ENCODE measurements at regions of chr2 and their contacts with region 1.

Region 1: GRCh38 chr2:169584005-169584877 is at the start of gene PPIG:
- DNase-seq: peak; percentile 88 to 92
- H3K4me3 ChIP-seq: peak within 1 kb of the TSS; percentile 86
- H3K4me3 Mint-ChIP-seq: peak within 1 kb of the TSS; percentile 99
- H3K27ac Mint-ChIP-seq: peak within 1 kb of the TSS; percentile 99
- H3K4me1 ChIP-seq: peaks cover 8% of the 10 kb centered on the region
- H3K4me1 Mint-ChIP-seq: peaks cover 4% of the 10 kb centered on the region
- H3K27me3 ChIP-seq: no peaks in the 10 kb centered on the region
- H3K27me3 Mint-ChIP-seq: no peaks in the 10 kb centered on the region
- CTCF ChIP-seq: no peak
- total RNA-seq, gene PPIG: 60.3 and 68.9 TPM in 2 replicates

Region 2: GRCh38 chr2:169562519-169562918 is 21.7 kb before region 1 on chr2:
- CTCF ChIA-PET with region 1: no interaction called
- POLR2A ChIA-PET with region 1: no interaction called
- intact Hi-C with region 1: no loop called
- DNase-seq: no peak
- H3K4me3 ChIP-seq: no peak overlapping the region
- H3K4me3 Mint-ChIP-seq: no peak overlapping the region
- H3K27ac Mint-ChIP-seq: no peak overlapping the region
- H3K4me1 ChIP-seq: no peaks in the 10 kb centered on the region
- H3K4me1 Mint-ChIP-seq: no peaks in the 10 kb centered on the region
- H3K27me3 ChIP-seq: no peaks in the 10 kb centered on the region
- H3K27me3 Mint-ChIP-seq: no peaks in the 10 kb centered on the region
- CTCF ChIP-seq: no peak

Region 3: DNA sequence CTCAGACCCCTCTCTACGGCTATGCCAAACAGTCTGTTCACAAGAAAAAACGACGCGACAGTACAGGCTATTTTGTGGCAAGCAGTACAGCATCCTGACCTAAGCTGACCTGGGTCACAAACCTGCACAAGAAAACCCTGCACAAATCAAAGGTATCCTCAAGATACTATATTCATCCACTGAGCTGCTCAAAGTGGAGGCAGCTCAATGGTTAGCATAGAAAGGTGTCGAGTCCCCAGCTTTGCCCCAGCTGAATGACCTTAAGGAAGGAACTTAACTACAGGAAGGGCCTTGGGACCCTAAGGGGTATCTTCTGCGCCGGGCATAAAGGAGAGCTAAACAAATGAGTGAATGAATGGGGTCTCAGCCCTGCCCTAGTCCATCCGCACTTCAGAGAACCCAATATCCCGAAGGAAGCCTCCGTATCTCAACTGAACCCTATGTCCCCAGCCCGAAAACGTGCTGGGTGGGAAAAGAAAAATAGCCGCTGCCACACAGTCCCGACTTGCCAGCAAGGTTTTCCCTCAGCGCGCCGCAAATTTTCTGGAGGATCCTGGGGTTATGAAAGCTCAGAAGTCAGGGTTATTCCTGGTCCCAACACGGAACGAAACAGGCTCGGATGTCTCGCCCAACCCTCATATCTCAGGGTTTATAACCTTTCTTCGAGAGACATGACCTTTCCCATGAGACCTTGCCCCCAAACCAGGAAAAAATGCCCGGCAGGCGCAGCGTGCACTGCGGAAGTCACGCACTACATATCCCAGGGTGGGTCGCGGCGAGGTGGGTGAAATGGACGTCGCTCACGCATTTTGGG is 10.9 kb before region 1 on chr2 and contains the start of gene FASTKD1:
- CTCF ChIA-PET with region 1: no interaction called
- POLR2A ChIA-PET with region 1: interaction called, 7 read pairs
- intact Hi-C with region 1: loop called (anchors 1 kb)
- DNase-seq: peak; percentile 93 to 96
- H3K4me3 ChIP-seq: peak within 1 kb of the TSS; percentile 56
- H3K4me3 Mint-ChIP-seq: peak within 1 kb of the TSS; percentile 98
- H3K27ac Mint-ChIP-seq: peak within 1 kb of the TSS; percentile 93
- H3K4me1 ChIP-seq: peaks cover 4% of the 10 kb centered on the region; the same call in 1 of the 2 replicates
- H3K4me1 Mint-ChIP-seq: no peaks in the 10 kb centered on the region
- H3K27me3 ChIP-seq: no peaks in the 10 kb centered on the region
- H3K27me3 Mint-ChIP-seq: no peaks in the 10 kb centered on the region
- CTCF ChIP-seq: no peak
- total RNA-seq, gene FASTKD1: 27.6 and 36.8 TPM in 2 replicates

Region 4: GRCh38 chr2:169659320-169659719 is 75.1 kb after region 1 on chr2:
- CTCF ChIA-PET with region 1: no interaction called
- POLR2A ChIA-PET with region 1: no interaction called
- intact Hi-C with region 1: no loop called
- DNase-seq: no peak
- H3K4me3 ChIP-seq: no peak overlapping the region
- H3K4me3 Mint-ChIP-seq: no peak overlapping the region
- H3K27ac Mint-ChIP-seq: no peak overlapping the region
- H3K4me1 ChIP-seq: no peaks in the 10 kb centered on the region
- H3K4me1 Mint-ChIP-seq: no peaks in the 10 kb centered on the region
- H3K27me3 ChIP-seq: no peaks in the 10 kb centered on the region
- H3K27me3 Mint-ChIP-seq: peaks cover 13% of the 10 kb centered on the region
- CTCF ChIP-seq: no peak

Region 5: GRCh38 chr2:170298115-170298514 is 713.9 kb after region 1 on chr2:
- CTCF ChIA-PET with region 1: no interaction called
- POLR2A ChIA-PET with region 1: no interaction called
- intact Hi-C with region 1: no loop called
- DNase-seq: no peak
- H3K4me3 ChIP-seq: no peak overlapping the region
- H3K4me3 Mint-ChIP-seq: no peak overlapping the region
- H3K27ac Mint-ChIP-seq: no peak overlapping the region
- H3K4me1 ChIP-seq: no peaks in the 10 kb centered on the region
- H3K4me1 Mint-ChIP-seq: no peaks in the 10 kb centered on the region
- H3K27me3 ChIP-seq: no peaks in the 10 kb centered on the region
- H3K27me3 Mint-ChIP-seq: peaks cover 3% of the 10 kb centered on the region
- CTCF ChIP-seq: no peak